Vagina (tissue), 2 donors: ENCODE measurements at regions of chr3 and their contacts with region 1.

Region 1: GRCh38 chr3:182479419-182480336 is 313.6 kb upstream of the ATP11B start:
- DNase-seq: no peak
- H3K4me3 ChIP-seq: no peak overlapping the region
- H3K27ac ChIP-seq: no peak overlapping the region
- H3K4me1 ChIP-seq: no peaks in the 10 kb centered on the region
- H3K27me3 ChIP-seq: no peaks in the 10 kb centered on the region
- CTCF ChIP-seq: no peak
- POLR2A ChIP-seq: no peak

Region 2: GRCh38 chr3:182521339-182521738 is 41.7 kb after region 1 on chr3:
- intact Hi-C with region 1: loop called (anchors 2 kb)
- DNase-seq: no peak
- H3K4me3 ChIP-seq: no peak overlapping the region
- H3K27ac ChIP-seq: no peak overlapping the region
- H3K4me1 ChIP-seq: no peaks in the 10 kb centered on the region
- H3K27me3 ChIP-seq: no peaks in the 10 kb centered on the region
- CTCF ChIP-seq: no peak
- POLR2A ChIP-seq: no peak